ENCODE measurements at regions of chr14 and their contacts with region 1.

Region 1: GRCh38 chr14:99628832-99629618 is 15.9 kb upstream of the HHIPL1 start:
- DNase-seq: peak; percentile 78
- H3K4me3 Mint-ChIP-seq: no peak overlapping the region
- H3K27ac Mint-ChIP-seq: no peak overlapping the region
- H3K4me1 Mint-ChIP-seq: peaks cover 2% of the 10 kb centered on the region
- H3K27me3 Mint-ChIP-seq: peaks cover 41% of the 10 kb centered on the region

Region 2: DNA sequence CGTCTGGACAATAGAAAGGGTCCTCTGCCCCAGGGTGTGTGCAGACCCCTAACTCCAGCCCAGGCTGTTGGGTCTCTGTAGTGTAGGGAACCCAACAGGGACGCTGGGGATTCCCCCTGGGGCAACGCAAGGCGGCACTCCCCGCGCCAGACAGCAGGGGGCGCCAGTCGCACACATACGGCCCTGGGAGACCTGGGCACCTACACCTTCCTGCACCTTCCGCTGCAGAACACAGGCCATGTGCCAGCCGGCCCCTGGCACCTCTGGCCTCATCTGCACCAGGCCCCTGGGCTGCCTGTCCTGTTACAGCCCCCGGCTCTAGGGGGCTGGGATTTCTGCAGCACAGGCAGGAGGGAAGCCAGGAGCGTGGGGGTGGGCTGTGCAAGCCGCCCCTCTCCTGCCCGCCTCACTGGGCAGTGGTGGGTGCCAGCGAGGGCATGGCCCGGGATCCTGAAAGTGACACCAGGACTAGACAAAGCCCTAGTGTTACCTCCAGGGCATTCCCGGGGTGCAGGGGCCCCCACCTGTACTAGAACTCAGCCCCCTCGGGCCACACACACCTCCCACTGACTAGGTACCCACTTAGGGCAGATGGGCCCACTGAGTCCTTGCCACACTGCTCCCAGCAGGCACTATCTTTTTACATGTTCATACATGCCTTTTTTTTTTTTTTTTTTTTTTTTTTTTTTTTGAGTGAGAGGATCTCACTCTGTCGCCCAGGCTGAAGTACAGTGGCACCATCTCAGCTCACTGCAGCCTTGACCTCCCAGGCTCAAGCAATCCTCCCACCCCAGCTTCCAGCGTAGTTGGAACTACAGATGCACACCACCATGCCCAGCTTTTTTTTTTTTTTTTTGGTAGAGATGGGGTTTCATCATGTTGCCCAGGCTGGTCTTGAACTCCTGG is 110.3 kb before region 1 on chr14:
- CTCF ChIA-PET with region 1: interaction called, 11 read pairs
- DNase-seq: peak; percentile 88
- H3K4me3 Mint-ChIP-seq: no peak overlapping the region
- H3K27ac Mint-ChIP-seq: no peak overlapping the region
- H3K4me1 Mint-ChIP-seq: no peaks in the 10 kb centered on the region
- H3K27me3 Mint-ChIP-seq: no peaks in the 10 kb centered on the region

Measured in activated naive CD4-positive, alpha-beta T cell treated with anti-CD3 and anti-CD28 coated beads, Interleukin-2, amount 10 ng/mL, durations not matched to agents 7 days and 5 days (primary cell).